Dorsolateral prefrontal cortex (tissue), 120 donors: ENCODE measurements at regions of chr11 and their contacts with region 1.

Region 1: GRCh38 chr11:46916286-46917108 is 1.9 kb downstream of the LRP4 start:
- DNase-seq: peak in 4 of 10 donors; percentile 37 to 49 (median 44)
- H3K4me3 ChIP-seq: peak overlapping the region; percentile 51 to 86 (median 75)
- H3K27ac ChIP-seq: peak overlapping the region in 57 of 59 donors; percentile 5 to 91 (median 84)
- H3K27me3 ChIP-seq: peaks cover 0 to 13% (median 0%) of the 10 kb centered on the region in 45 donors
- CTCF ChIP-seq: peak in 25 of 56 donors; percentile 7 to 32 (median 16)

Region 2: DNA sequence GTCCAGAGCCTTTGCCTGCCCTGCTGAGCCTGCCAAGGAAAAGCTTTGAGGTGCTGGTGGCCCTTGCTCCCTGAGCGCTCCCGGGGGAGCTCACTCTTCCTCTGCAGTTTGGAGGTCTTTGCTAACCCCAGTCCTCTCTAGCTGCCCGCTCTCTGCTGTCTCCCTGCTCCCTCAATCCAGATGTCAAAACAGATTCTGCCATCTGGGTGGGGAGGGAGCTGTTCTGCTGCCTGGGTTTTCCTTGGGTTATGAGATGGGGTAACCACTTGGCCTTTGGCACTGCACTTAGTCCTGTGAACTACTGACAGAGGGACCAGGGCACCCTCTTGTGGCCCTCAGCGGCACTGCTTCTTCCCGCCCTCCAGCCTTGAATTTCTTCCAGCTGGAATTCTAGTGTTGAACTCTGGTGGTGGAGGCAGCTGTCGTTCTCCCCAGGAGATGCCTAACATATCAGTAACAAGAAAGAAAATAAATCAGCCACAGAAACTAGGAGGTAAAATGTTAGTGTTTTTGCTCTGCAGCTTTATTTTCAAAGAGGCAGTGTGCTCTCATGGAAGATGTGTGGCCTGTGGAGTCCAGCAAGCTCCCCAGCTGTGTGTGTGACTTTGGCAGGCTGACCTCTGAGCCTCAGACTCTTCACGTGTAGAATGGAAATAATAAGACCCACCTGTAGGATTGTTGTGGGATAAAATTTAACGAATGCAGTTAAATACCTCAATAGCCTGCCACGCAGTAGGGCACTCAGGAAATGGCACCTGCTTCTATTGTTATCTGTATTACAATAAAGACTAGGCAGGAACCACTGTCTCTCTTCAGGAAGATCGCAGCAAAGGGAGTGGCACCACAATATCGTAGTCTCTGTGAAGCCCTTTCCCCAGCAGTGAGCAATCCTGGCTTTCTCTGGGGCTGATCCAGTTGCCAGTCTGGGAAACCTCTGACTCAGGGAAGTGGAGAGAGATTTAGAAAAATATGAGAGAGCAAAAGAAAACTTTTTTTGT is 236.8 kb after region 1 on chr11:
- intact Hi-C with region 1: loop called in 1 of 2 experiments (anchors 2 kb)
- DNase-seq: peak; percentile 78 to 93 (median 86)
- H3K4me3 ChIP-seq: no peak overlapping the region
- H3K27ac ChIP-seq: peak overlapping the region in 56 of 59 donors; percentile 6 to 88 (median 61)
- H3K27me3 ChIP-seq: no peaks in the 10 kb centered on the region
- CTCF ChIP-seq: peak; percentile 84 to 99 (median 95)